RWPE1 (cell line): ENCODE measurements at regions of chr20 and their contacts with region 1.

Region 1: GRCh38 chr20:58852548-58853271 is at the start of gene GNAS:
- DNase-seq: peak; percentile 90
- H3K27ac ChIP-seq: no peak within 1 kb of the TSS
- CTCF ChIP-seq: peak; percentile 95

Region 2: GRCh38 chr20:58650776-58651558 is 201.7 kb before region 1 on chr20 and contains the start of gene STX16:
- CTCF ChIA-PET with region 1: interaction called, 14 read pairs
- POLR2A ChIA-PET with region 1: interaction called, 3 read pairs
- DNase-seq: peak; percentile 100
- H3K27ac ChIP-seq: peak within 1 kb of the TSS; percentile 87
- CTCF ChIP-seq: peak; percentile 99

Region 3: DNA sequence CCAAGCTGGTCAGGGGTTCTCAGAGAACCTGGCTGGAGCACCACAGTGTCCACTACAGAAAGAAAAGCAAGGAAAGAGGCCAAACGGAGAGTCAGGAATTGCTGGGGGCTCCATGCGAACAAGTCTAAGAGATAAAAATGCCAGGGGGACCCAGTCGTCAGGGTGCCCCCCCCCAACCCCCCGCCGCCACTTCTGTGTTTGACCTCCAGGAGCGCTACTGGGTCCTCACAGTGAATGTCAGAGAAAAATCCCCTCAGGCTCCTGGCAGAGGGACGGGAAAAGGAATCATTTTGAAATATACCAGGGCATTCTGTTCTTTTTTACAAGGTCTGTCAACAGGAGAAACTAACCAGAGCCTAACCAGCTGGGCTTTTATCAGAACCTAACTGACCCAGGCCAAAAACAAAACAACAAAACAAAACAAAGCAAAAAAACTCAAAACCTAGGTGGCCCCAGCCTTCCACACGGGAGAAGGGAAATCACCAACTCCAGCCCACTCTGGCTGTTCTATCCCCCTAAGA is 110.4 kb after region 1 on chr20:
- CTCF ChIA-PET with region 1: no interaction called
- POLR2A ChIA-PET with region 1: no interaction called
- DNase-seq: no peak
- H3K27ac ChIP-seq: no peak overlapping the region
- CTCF ChIP-seq: no peak